Activated CD4-positive, alpha-beta T cell treated with anti-CD3 and anti-CD28 coated beads for 36 hours (primary cell): ENCODE measurements at regions of chr7 and their contacts with region 1.

Region 1: GRCh38 chr7:31957090-31957720 is 113.0 kb downstream of the PDE1C start:
- DNase-seq: no peak
- ATAC-seq: no peak
- H3K4me3 Mint-ChIP-seq: no peak overlapping the region
- H3K27ac Mint-ChIP-seq: no peak overlapping the region
- H3K4me1 Mint-ChIP-seq: no peaks in the 10 kb centered on the region
- H3K27me3 Mint-ChIP-seq: no peaks in the 10 kb centered on the region

Region 2: GRCh38 chr7:31875424-31875823 is 81.8 kb before region 1 on chr7:
- CTCF ChIA-PET with region 1: no interaction called
- POLR2A ChIA-PET with region 1: no interaction called
- intact Hi-C with region 1: loop called in 1 of 2 experiments (anchors 10 kb)
- DNase-seq: no peak
- ATAC-seq: no peak
- H3K4me3 Mint-ChIP-seq: no peak overlapping the region
- H3K27ac Mint-ChIP-seq: no peak overlapping the region
- H3K4me1 Mint-ChIP-seq: no peaks in the 10 kb centered on the region
- H3K27me3 Mint-ChIP-seq: no peaks in the 10 kb centered on the region

Region 3: DNA sequence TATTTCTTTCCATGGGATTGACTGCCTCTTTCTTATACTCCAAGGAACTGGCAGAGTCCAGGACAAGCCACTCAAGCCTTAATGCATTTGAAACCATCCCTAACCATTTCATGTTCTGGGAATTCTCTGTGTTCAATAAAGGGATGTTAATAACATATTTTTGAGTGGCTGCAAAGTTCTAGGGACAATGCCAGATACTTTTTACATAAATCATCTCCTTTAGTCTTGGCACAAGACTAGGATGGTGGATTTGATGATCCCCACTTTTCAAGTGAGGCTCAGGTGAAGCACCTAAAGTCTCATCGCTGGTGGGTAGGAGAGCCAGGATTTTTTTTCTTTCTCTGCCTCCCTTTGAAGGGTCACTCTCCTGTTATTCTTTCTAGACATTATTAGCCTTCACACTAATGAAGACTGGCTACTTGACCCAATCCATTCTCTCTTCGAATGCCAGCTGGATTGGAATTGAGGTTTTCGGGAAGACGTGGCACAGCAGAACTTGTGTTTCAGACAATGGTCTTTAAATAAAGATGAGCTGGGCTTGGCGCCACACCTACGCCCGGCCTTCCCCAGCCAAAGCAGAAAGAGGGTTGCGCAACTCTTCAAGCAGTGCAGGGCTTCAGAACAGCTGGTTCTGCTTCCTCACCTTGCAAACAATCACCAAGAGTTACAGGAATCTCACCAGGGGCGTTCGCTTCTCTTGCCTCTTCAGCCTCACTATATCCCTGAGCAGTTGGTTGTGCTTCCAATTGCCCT is 1874.4 kb after region 1 on chr7:
- CTCF ChIA-PET with region 1: no interaction called
- POLR2A ChIA-PET with region 1: no interaction called
- intact Hi-C with region 1: no loop called
- DNase-seq: no peak
- ATAC-seq: no peak
- H3K4me3 Mint-ChIP-seq: no peak overlapping the region
- H3K27ac Mint-ChIP-seq: no peak overlapping the region
- H3K4me1 Mint-ChIP-seq: no peaks in the 10 kb centered on the region
- H3K27me3 Mint-ChIP-seq: no peaks in the 10 kb centered on the region